Panc1 (cell line): ENCODE measurements at regions of chr18 and their contacts with region 1.

Region 1: DNA sequence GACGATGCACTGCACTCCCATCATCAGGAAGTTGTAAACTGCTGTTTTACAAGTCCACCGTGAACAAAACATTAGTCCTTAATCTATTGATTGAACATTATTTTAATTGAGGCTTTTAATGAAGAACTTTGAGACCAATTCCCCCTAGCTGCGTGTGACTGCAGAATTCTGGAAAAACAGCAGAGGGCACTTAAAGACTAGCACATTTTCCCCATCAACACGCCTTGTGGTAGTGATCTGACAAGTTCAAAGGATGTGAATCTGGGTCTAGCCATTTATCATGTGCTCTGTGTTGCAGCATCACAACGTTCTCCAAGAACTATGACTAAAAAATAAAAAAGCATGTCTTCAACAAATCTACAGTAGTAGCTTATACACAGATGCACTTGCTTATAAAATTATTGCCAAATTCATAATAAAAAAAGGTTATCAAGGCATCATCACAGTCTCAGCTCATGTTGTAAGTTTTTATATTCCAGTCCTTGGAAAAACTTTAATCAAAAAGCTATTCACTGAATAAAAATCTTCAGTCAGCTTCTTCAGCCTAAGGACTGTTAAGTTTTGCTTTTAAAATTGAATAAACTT is 35.8 kb downstream of the SKOR2 start:
- DNase-seq: no peak
- ATAC-seq: 0 out of 2 replicates have a peak, but pooled peaks have one; percentile 70
- H3K4me3 ChIP-seq: no peak overlapping the region
- H3K27ac ChIP-seq: no peak overlapping the region
- H3K4me1 ChIP-seq: no peaks in the 10 kb centered on the region
- H3K27me3 ChIP-seq: peaks cover 4% of the 10 kb centered on the region
- CTCF ChIP-seq: peak; percentile 65

Region 2: DNA sequence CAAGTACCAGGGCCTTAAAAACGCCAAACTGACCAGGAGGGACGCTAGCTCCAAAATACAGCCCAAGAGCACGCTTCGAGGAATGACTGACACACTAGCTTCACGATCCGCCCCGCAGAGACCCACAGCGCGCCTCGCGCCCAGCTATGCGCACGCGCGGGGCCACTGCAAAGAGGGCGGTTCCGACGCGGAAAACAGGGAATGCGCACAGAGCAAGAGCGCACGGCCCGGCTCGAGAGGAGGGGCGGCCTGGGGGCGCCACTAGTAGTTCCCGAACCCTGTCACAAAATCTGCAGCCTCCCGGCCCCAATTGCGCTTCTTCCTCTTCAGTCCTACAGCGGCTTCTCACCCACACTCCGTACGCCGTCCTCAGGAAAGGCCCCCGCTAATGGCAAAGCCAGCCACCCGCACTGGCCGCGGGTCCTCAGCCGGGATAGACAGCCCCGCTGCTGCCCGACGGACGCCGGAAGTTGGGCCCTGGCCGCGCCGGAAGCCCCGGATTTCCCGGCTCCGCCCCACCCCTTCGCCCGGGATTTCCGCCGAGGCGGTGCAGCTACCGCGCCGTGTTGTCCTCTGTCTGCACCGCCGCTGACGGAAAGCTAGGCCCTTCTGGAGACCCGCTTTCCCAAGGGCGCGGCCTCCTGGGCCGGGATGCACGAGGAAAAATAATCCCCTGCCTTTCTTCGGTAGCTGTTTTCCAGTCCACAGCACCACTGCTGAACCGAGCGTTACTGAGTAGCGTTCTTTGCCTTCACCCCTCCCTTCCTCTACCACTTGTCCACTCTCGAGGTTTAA is 65.4 kb before region 1 on chr18 and contains the start of gene HDHD2:
- CTCF ChIA-PET with region 1: no interaction called
- POLR2A ChIA-PET with region 1: interaction called, 13 read pairs
- in situ Hi-C with region 1: no loop called
- intact Hi-C with region 1: no loop called
- DNase-seq: peak; percentile 46
- ATAC-seq: peak; percentile 99
- H3K4me3 ChIP-seq: peak within 1 kb of the TSS; percentile 58 to 90
- H3K27ac ChIP-seq: peak within 1 kb of the TSS; percentile 84
- H3K4me1 ChIP-seq: no peaks in the 10 kb centered on the region; the same call in 1 of the 2 replicates
- H3K27me3 ChIP-seq: no peaks in the 10 kb centered on the region
- CTCF ChIP-seq: no peak
- total RNA-seq, gene HDHD2: 24.6 TPM

Region 3: GRCh38 chr18:47283476-47283875 is 67.8 kb after region 1 on chr18:
- CTCF ChIA-PET with region 1: no interaction called
- POLR2A ChIA-PET with region 1: no interaction called
- in situ Hi-C with region 1: no loop called
- intact Hi-C with region 1: loop called (anchors 2 kb)
- DNase-seq: no peak
- ATAC-seq: peak; percentile 69; the same call in 1 of the 2 replicates
- H3K4me3 ChIP-seq: no peak overlapping the region
- H3K27ac ChIP-seq: no peak overlapping the region
- H3K4me1 ChIP-seq: no peaks in the 10 kb centered on the region
- H3K27me3 ChIP-seq: no peaks in the 10 kb centered on the region
- CTCF ChIP-seq: peak; percentile 68

Region 4: DNA sequence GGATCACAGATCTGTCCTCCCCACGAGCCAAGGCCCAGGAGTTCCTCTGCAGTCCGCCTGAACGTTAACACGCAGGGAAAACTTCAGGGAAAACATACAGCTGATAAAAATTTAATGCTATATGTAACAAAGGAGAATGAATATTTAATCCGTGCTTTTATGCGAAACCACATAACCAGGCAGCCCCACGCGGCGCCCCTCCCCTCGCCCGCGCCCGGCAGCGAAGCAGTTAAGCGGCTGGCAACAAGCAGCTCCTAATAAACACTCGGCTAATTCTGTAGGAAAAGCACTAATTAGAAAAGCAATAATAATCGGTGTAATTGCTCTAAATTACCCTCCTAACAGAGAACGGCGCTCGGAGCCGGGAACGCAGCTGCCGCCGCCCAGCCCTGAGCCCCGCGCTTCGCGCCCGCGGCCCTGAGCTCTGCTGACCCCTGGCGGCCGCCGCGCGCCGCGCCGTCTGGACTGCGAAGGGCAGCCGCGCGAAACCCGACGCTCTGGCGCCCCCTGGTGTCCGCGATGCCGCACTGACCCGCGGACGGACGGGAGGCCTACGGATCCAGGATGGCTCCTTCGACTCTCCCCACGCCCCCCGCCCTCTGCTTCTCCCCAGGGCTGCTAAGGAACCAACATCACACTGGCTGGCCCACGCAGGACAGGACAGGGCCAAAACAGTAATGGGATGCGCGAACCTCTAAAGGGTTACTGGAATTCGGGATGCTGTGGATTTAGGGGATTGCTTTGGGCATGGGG is 533.4 kb after region 1 on chr18:
- CTCF ChIA-PET with region 1: interaction called, 3 read pairs
- POLR2A ChIA-PET with region 1: no interaction called
- in situ Hi-C with region 1: no loop called
- intact Hi-C with region 1: loop called (anchors 5 kb)
- DNase-seq: peak; percentile 24
- ATAC-seq: peak; percentile 92
- H3K4me3 ChIP-seq: no peak overlapping the region; a peak in 1 of 4 replicates
- H3K27ac ChIP-seq: no peak overlapping the region
- H3K4me1 ChIP-seq: no peaks in the 10 kb centered on the region
- H3K27me3 ChIP-seq: no peaks in the 10 kb centered on the region; the same call in 1 of the 2 replicates
- CTCF ChIP-seq: peak; percentile 97